ENCODE measurements at regions of chr2 and their contacts with region 1.

Region 1: DNA sequence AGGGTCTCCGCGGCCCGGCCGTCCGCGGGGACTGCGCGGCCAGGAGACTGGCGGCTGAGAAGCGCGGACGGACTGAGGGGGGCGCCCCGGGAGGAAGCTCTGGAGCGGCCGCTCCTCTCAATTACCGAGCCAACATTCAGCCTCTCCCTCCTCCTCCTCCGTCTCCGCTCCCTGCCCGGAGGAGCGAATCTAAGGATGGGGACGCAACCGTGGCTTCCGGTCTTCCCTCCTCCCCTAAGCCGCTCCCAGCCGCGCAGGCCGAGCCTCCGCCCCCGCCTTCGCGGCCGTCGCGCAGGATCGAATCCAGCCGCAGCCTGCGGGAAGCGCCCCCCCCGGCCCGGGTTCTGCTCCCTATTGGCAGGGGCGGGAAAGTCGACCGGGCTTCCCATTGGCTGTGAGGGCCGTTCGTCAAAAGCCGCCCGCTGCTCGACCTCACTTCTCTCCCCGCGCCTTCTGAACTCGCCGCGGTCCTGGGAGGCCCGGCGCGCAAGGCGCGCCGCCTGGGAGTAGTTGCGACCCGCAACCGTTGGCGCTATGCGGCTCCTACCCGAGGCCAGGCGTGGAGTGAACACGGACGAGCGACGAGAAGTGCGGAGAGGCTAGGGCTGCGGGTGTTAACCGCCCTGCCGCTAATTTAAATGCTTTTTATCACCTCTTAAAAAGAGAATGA is at the start of gene HNRNPLL:
- DNase-seq: peak; percentile 93 to 99
- ATAC-seq: peak; percentile 93 to 94
- H3K4me3 ChIP-seq: peak within 1 kb of the TSS; percentile 91
- H3K27ac ChIP-seq: peak within 1 kb of the TSS; percentile 95 to 97
- H3K4me1 ChIP-seq: peaks cover 39% of the 10 kb centered on the region
- CTCF ChIP-seq: no peak
- EP300 ChIP-seq: no peak
- POLR2A ChIP-seq: peak; percentile 98
- RAD21 ChIP-seq: no peak
- polyA plus RNA-seq, gene HNRNPLL: 67.5 and 73.8 TPM in 2 replicates

Region 2: GRCh38 chr2:38581193-38582147 is 21.4 kb before region 1 on chr2:
- CTCF ChIA-PET with region 1: interaction called, 138 read pairs
- POLR2A ChIA-PET with region 1: interaction called, 5 read pairs
- DNase-seq: peak in 1 of 2 experiments; percentile 83
- ATAC-seq: peak; percentile 91 to 97
- H3K4me3 ChIP-seq: no peak overlapping the region
- H3K27ac ChIP-seq: no peak overlapping the region
- H3K4me1 ChIP-seq: peaks cover 3% of the 10 kb centered on the region; the same call in 1 of the 3 replicates
- CTCF ChIP-seq: peak; percentile 94
- EP300 ChIP-seq: no peak
- POLR2A ChIP-seq: no peak
- RAD21 ChIP-seq: peak; percentile 89 to 91

Region 3: DNA sequence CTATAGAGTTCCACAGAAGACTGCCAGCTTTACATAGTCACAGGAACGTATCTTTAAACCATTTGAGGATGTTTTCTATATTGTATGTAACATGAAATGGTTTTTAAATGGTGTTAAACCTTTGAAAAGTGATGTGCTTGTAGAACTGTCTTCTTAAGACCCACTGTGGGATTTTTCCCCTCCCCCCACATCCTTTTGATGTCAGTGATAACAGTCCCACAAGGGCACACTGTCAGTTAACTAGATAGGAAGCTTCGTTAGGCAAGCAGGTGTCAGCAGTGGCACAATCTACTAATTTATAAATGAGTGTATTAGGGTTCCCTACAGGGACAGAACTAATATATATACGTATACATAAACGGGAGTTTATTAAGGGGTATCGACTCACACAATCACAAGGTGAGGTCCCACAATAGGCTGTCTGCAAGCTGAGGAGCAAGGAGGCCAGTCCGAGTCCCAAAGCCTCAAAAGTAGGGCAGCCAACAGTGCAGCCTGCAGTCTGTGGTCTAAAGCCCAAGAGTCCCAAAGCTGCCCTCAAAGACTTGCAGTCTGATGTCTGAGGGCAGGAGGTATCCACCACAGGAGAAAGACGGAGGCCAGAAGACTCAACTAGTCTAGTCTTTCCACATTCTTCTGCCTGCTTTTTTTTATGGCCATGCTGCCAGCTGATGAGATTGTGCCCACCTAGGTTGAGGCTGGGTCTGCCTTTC is 23.6 kb after region 1 on chr2:
- CTCF ChIA-PET with region 1: interaction called, 21 read pairs
- POLR2A ChIA-PET with region 1: no interaction called
- DNase-seq: no peak
- ATAC-seq: no peak; a peak in 1 of 6 replicates
- H3K4me3 ChIP-seq: no peak overlapping the region
- H3K27ac ChIP-seq: no peak overlapping the region
- H3K4me1 ChIP-seq: no peaks in the 10 kb centered on the region
- CTCF ChIP-seq: no peak
- EP300 ChIP-seq: no peak
- POLR2A ChIP-seq: no peak
- RAD21 ChIP-seq: no peak

Region 4: GRCh38 chr2:38685116-38685735 is 82.4 kb after region 1 on chr2:
- CTCF ChIA-PET with region 1: interaction called, 18 read pairs
- POLR2A ChIA-PET with region 1: interaction called, 6 read pairs
- DNase-seq: peak; percentile 89 to 95
- ATAC-seq: peak; percentile 90 to 95
- H3K4me3 ChIP-seq: no peak overlapping the region
- H3K27ac ChIP-seq: peak overlapping the region; percentile 82 to 90
- H3K4me1 ChIP-seq: peaks cover 46% of the 10 kb centered on the region
- CTCF ChIP-seq: no peak
- EP300 ChIP-seq: peak; percentile 58 to 78; a peak in 2 of 5 replicates
- POLR2A ChIP-seq: no peak
- RAD21 ChIP-seq: peak in 1 of 2 experiments; percentile 53; a peak in 3 of 5 replicates

Region 5: GRCh38 chr2:38720613-38721241 is 117.9 kb after region 1 on chr2:
- CTCF ChIA-PET with region 1: interaction called, 152 read pairs
- POLR2A ChIA-PET with region 1: interaction called, 4 read pairs
- DNase-seq: peak in 1 of 2 experiments; percentile 70
- ATAC-seq: peak in 1 of 2 experiments; percentile 23; a peak in 3 of 6 replicates
- H3K4me3 ChIP-seq: no peak overlapping the region
- H3K27ac ChIP-seq: peak overlapping the region in 1 of 2 experiments; percentile 38; a peak in 2 of 6 replicates
- H3K4me1 ChIP-seq: peaks cover 30% of the 10 kb centered on the region
- CTCF ChIP-seq: no peak
- EP300 ChIP-seq: no peak
- POLR2A ChIP-seq: no peak
- RAD21 ChIP-seq: no peak

Region 6: DNA sequence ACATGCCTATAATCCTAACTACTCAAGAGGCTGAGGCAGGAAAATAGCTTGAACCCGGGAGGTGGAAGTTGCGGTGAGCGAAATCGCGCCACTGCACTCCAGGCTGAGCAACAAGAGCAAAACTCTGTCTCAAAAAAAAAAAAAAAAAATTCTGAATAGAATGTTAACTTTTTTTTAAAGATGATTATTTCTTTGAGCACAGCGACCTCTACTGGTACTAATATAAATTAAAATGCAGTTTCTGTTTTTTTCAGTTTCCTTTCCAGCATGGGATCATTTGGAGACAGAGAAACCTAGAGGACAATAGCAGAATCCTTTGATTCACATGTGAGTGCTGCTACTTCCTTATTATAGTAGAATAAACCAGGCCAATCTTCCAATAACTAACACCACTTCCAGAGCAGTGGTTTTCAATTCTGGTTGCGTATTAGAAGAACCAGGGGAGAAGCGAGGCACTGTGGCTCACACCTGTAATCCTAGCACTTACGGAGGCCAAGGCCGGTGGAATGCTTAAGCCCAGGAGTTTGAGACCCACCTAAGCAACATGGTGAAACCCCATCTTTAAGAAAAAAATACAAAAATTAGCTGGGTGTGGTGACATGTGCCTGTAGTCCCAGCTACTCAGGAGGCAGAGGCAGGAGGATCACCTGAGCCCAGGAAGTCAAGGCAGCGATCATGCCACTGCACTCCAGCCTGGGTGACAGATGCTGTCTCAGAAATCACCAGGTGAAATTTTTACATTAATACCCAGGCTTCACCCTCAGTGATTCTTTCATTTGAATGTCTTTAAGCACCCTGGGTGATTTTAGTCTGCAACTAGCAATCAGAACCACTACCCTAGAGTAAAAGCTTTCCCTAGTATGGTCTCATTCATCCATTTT is 138.2 kb after region 1 on chr2:
- CTCF ChIA-PET with region 1: interaction called, 16 read pairs
- POLR2A ChIA-PET with region 1: interaction called, 8 read pairs
- DNase-seq: peak; percentile 61 to 73
- ATAC-seq: peak; percentile 60 to 64; a peak in 5 of 6 replicates
- H3K4me3 ChIP-seq: no peak overlapping the region
- H3K27ac ChIP-seq: no peak overlapping the region
- H3K4me1 ChIP-seq: peaks cover 24% of the 10 kb centered on the region
- CTCF ChIP-seq: peak; percentile 80
- EP300 ChIP-seq: no peak
- POLR2A ChIP-seq: no peak
- RAD21 ChIP-seq: peak; percentile 48 to 74

Measured in A549 (cell line).